ENCODE measurements at regions of chr9 and their contacts with region 1.

Region 1: GRCh38 chr9:19028835-19029451 is 4.1 kb downstream of the SAXO1 start:
- DNase-seq: peak; percentile 29
- H3K4me3 ChIP-seq: no peak overlapping the region
- H3K27ac ChIP-seq: no peak overlapping the region
- H3K4me1 ChIP-seq: no peaks in the 10 kb centered on the region
- H3K27me3 ChIP-seq: peaks cover 7% of the 10 kb centered on the region
- CTCF ChIP-seq: peak; percentile 70 to 75 (median 72)
- EP300 ChIP-seq: no peak
- POLR2A ChIP-seq: no peak

Region 2: DNA sequence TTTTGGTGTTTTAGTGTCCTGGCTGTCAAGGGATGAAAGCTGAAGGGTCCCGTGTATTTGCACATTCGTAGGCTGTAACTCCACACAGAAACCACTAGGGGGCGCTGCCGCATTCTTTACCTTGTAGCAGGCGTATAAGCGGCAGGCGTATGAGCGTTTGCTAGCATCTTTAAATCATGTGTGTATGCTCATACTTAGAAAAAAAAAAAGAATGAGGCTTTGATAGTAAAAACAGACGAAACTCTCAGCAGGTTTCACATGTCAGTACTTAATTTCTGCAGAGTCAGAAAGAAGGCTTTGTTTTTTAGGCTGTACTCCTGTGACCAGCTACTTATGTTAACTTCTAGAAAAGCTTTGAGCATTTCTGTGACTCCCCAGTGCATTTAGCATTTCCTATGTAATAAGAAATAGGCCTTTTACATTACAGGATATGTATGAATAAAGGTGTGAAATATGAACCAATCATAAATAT is 773.7 kb before region 1 on chr9:
- in situ Hi-C with region 1: loop called (anchors 10 kb)
- intact Hi-C with region 1: loop called (anchors 5 kb)
- DNase-seq: peak; percentile 78
- H3K4me3 ChIP-seq: no peak overlapping the region
- H3K27ac ChIP-seq: no peak overlapping the region
- H3K4me1 ChIP-seq: peaks cover 0 to 12% (median 0%) of the 10 kb centered on the region in 4 donors
- H3K27me3 ChIP-seq: no peaks in the 10 kb centered on the region
- CTCF ChIP-seq: peak; percentile 87 to 95 (median 94)
- EP300 ChIP-seq: no peak
- POLR2A ChIP-seq: no peak